Activated CD4-positive, alpha-beta memory T cell treated with anti-CD3 and anti-CD28 coated beads, Interleukin-2, amount 10 ng/mL, durations not matched to agents 7 days and 5 days (primary cell): ENCODE measurements at regions of chr9 and their contacts with region 1.

Region 1: GRCh38 chr9:129962889-129963703 is 79.9 kb downstream of the FNBP1 start:
- DNase-seq: peak; percentile 83
- H3K4me3 Mint-ChIP-seq: peak overlapping the region; percentile 74
- H3K27ac Mint-ChIP-seq: peak overlapping the region; percentile 93
- H3K4me1 Mint-ChIP-seq: peaks cover 73% of the 10 kb centered on the region
- H3K27me3 Mint-ChIP-seq: no peaks in the 10 kb centered on the region

Region 2: GRCh38 chr9:129889941-129890717 is 73.0 kb before region 1 on chr9:
- CTCF ChIA-PET with region 1: interaction called, 7 read pairs
- POLR2A ChIA-PET with region 1: interaction called, 70 read pairs
- DNase-seq: peak; percentile 86
- H3K4me3 Mint-ChIP-seq: peak overlapping the region; percentile 80
- H3K27ac Mint-ChIP-seq: peak overlapping the region; percentile 100
- H3K4me1 Mint-ChIP-seq: peaks cover 89% of the 10 kb centered on the region
- H3K27me3 Mint-ChIP-seq: no peaks in the 10 kb centered on the region

Region 3: DNA sequence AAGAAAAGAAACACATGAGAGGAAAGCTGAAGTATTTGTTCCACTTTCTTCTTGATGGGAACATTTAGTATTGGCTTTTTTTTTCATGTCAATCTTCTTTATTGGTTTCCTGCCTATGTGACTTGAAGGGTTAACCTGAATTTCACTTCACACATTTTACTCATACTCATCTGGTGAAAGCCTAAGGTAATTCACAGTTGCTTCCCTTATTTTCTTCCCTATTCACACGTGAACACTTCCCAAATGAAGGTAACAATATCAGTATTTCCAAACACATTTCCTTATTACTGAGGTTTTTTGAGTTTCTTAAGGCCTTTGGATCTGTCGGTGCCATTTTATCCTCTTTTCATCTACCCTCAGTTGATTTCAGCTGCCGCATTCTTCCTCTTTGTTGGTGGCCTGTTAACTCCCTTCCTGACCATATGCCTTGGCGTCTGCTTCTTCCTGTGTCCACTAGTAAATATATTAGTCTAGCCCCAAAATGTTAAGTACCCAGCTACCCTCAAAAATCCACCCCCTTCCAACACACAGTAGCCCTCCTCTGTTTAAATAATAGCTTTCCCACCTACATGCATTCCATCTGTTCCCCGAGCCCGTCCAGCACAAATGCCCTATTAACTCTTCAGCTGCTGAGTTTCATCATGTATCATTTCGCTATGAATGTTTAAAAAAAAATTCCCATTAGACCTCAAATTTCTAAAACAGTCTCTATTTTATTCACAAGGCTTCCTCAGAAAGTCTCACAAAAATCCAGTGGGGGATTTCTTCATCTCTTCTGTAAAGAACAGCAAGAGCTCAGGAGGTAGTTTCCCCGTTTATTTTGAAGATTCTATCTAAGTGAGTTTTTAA is 30.6 kb before region 1 on chr9:
- CTCF ChIA-PET with region 1: interaction called, 6 read pairs
- POLR2A ChIA-PET with region 1: interaction called, 19 read pairs
- DNase-seq: no peak
- H3K4me3 Mint-ChIP-seq: peak overlapping the region; percentile 63
- H3K27ac Mint-ChIP-seq: peak overlapping the region; percentile 77
- H3K4me1 Mint-ChIP-seq: peaks cover 62% of the 10 kb centered on the region
- H3K27me3 Mint-ChIP-seq: no peaks in the 10 kb centered on the region

Region 4: DNA sequence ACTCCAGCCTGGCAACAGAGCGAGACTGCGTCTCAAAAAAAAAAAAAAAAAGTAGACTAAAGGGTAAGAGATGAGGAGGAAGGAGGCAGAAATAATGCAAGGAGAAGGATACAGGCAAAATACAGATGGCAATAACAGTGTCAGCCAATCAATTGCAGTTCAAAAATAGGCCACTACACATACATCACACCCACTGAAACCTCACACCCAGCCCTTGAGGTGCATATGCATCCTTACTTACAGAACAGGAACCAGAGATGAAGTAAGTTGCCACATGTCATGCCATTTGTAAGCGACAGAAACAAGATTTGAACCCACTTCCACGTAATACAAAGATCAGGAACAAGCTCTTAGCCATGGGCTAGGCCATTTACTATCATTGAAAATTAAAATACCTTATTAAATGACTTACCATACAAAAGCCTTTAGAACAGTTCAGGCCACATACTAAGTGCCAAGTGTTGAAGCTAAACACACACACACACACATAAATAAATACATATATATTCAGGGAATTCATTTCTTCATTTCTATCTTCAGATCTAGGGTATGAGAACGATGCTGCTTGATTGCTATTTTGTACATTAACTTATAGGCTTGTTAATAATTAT is 18.5 kb before region 1 on chr9:
- CTCF ChIA-PET with region 1: no interaction called
- POLR2A ChIA-PET with region 1: interaction called, 38 read pairs
- DNase-seq: peak; percentile 76
- H3K4me3 Mint-ChIP-seq: peak overlapping the region; percentile 1
- H3K27ac Mint-ChIP-seq: peak overlapping the region; percentile 80
- H3K4me1 Mint-ChIP-seq: peaks cover 49% of the 10 kb centered on the region
- H3K27me3 Mint-ChIP-seq: no peaks in the 10 kb centered on the region

Region 5: DNA sequence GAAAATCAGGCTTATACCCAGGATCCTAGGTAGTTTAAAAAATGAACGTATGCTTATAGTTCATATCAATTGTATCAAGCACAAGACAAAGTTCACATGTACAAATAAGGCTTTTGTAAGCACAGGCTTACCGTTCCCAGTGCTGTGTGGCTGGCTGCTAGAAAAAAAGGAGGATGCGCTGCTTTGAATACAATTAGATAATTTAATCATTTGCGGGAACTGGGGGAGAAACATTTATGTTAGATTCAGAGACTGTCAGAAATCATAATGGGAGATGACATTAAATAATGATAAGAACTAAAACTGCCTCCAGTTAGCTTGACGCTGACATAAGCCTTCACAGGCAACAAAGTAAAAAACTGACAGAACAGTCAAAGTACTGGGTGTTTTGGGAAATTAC is 13.3 kb before region 1 on chr9:
- CTCF ChIA-PET with region 1: interaction called, 9 read pairs
- POLR2A ChIA-PET with region 1: interaction called, 38 read pairs
- DNase-seq: no peak
- H3K4me3 Mint-ChIP-seq: no peak overlapping the region
- H3K27ac Mint-ChIP-seq: peak overlapping the region; percentile 5
- H3K4me1 Mint-ChIP-seq: peaks cover 48% of the 10 kb centered on the region
- H3K27me3 Mint-ChIP-seq: no peaks in the 10 kb centered on the region

Region 6: GRCh38 chr9:130029223-130029973 is 66.3 kb after region 1 on chr9:
- CTCF ChIA-PET with region 1: interaction called, 4 read pairs
- POLR2A ChIA-PET with region 1: interaction called, 20 read pairs
- DNase-seq: peak; percentile 53
- H3K4me3 Mint-ChIP-seq: peak overlapping the region; percentile 39
- H3K27ac Mint-ChIP-seq: peak overlapping the region; percentile 88
- H3K4me1 Mint-ChIP-seq: peaks cover 90% of the 10 kb centered on the region
- H3K27me3 Mint-ChIP-seq: no peaks in the 10 kb centered on the region